ENCODE measurements at regions of chr1 and their contacts with region 1.

Region 1: DNA sequence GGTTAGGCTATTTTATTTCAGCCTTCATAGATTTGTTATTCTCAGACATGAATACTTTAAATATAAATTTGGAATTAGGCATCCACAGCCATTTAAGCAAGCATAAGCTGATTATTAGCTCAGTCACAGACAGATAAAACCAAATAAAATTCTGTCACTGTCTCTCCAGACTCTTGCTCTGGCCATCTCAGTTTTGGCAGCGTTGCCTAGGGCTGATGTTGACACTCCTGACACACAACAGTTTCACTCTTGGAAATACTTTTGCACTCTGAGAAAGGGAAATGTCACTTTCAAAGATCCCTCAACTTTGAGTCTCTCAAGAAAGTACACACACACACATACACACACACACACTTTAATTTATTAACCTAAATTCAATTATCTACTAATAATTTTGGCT is 372.7 kb downstream of the BRINP3 start:
- DNase-seq: no peak
- H3K4me3 ChIP-seq: no peak overlapping the region
- H3K27ac ChIP-seq: no peak overlapping the region
- H3K4me1 ChIP-seq: no peaks in the 10 kb centered on the region
- H3K27me3 ChIP-seq: no peaks in the 10 kb centered on the region
- CTCF ChIP-seq: no peak
- EP300 ChIP-seq: no peak
- POLR2A ChIP-seq: no peak

Region 2: DNA sequence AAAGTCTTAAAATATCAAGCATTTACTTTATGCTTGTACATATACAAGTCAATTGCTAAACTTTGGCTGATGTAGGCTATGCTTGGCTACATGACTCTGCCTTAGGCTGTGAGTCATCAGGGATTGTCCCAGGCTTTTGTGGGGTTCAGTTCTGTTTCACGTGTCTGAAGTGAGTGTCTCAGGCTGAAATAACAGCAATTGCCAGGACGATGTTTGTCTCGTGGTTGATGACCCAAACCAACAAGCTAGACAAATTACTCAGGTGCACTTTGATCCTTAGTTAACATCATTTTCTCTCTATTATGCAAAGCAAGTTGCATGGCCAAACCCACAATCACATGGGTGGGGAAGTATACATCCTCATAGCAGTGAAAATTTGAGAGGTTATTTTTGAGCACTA is 37.4 kb before region 1 on chr1:
- intact Hi-C with region 1: no loop called
- DNase-seq: no peak
- H3K4me3 ChIP-seq: no peak overlapping the region
- H3K27ac ChIP-seq: no peak overlapping the region
- H3K4me1 ChIP-seq: no peaks in the 10 kb centered on the region
- H3K27me3 ChIP-seq: no peaks in the 10 kb centered on the region
- CTCF ChIP-seq: no peak
- EP300 ChIP-seq: no peak
- POLR2A ChIP-seq: no peak

Region 3: DNA sequence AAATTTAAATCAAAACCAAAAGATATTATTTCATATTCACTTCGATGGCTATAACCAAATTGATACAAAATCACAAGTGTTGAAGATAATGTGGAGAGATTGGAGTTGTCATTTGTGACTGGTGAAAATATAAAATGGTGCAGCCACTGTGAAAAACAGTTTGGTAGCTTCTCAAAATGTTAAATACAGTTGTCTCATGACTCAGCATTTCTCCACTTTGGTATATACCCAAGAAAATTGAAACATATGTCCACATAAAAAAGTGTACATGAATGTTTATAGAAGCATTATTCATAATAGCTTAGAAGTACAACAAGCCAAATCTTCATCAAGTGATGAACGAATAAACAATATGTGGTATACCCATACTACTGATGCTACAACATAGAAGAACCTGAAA is 54.2 kb after region 1 on chr1:
- intact Hi-C with region 1: no loop called
- DNase-seq: no peak
- H3K4me3 ChIP-seq: no peak overlapping the region
- H3K27ac ChIP-seq: no peak overlapping the region
- H3K4me1 ChIP-seq: no peaks in the 10 kb centered on the region
- H3K27me3 ChIP-seq: no peaks in the 10 kb centered on the region
- CTCF ChIP-seq: no peak
- EP300 ChIP-seq: no peak
- POLR2A ChIP-seq: no peak

Region 4: GRCh38 chr1:190258003-190258402 is 153.0 kb after region 1 on chr1:
- intact Hi-C with region 1: no loop called
- DNase-seq: no peak
- H3K4me3 ChIP-seq: no peak overlapping the region
- H3K27ac ChIP-seq: no peak overlapping the region
- H3K4me1 ChIP-seq: no peaks in the 10 kb centered on the region
- H3K27me3 ChIP-seq: no peaks in the 10 kb centered on the region
- CTCF ChIP-seq: no peak
- EP300 ChIP-seq: no peak
- POLR2A ChIP-seq: no peak

Region 5: GRCh38 chr1:190344454-190344853 is 239.5 kb after region 1 on chr1:
- intact Hi-C with region 1: loop called (anchors 10 kb)
- DNase-seq: no peak
- H3K4me3 ChIP-seq: no peak overlapping the region
- H3K27ac ChIP-seq: no peak overlapping the region
- H3K4me1 ChIP-seq: no peaks in the 10 kb centered on the region
- H3K27me3 ChIP-seq: no peaks in the 10 kb centered on the region
- CTCF ChIP-seq: no peak
- EP300 ChIP-seq: no peak
- POLR2A ChIP-seq: no peak